ENCODE measurements at regions of chr16 and their contacts with region 1.

Region 1: DNA sequence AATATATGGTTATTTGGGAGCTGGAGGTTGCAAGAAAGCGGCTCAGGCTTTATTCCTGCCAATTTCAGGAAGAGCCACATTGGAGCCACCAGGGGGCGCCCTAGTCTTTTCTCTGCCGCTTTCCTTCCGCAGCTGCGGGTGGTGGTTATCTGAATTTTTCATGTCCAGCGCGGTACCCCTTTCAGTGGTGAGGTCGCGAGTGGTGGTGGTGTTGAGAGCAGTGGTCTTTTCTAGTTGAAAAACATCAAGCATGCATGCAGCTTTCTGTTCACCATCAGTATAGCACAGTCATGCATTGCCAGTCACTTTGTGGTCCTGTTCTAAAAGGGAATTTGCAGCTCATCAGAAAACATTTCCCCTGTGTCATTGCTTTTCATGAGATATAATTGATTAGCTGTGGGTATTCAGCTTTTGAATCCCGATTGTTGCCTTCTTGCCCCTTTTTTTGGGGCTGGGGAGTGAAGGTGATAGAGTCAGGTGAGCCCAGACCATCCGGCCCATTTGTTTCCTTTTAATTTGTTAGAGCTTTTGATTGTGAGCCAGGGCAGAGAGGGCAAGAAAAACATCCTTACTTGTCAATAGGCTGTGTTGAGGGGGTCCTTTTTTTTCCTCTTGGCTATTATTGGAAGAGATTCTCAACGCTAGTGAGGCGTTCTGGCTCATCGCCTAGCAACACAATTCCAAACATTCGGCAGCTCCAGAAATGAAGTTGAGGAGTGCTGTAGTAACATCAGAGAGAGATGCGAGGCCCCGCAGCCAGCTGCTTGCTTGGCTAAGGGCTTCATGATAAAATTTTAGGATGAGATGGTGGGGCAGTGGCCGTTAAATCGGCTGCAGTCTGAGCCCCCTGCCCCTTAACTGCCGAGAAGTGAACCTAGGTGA is 119.0 kb downstream of the SNX29 start:
- DNase-seq: peak; percentile 79
- H3K4me3 ChIP-seq: no peak overlapping the region
- H3K27ac ChIP-seq: no peak overlapping the region
- H3K4me1 ChIP-seq: peaks cover 30% of the 10 kb centered on the region
- CTCF ChIP-seq: peak; percentile 100

Region 2: GRCh38 chr16:12147681-12148080 is 52.2 kb after region 1 on chr16:
- CTCF ChIA-PET with region 1: no interaction called
- POLR2A ChIA-PET with region 1: interaction called, 3 read pairs
- intact Hi-C with region 1: loop called (anchors 5 kb)
- DNase-seq: peak; percentile 93
- H3K4me3 ChIP-seq: peak overlapping the region; percentile 60
- H3K27ac ChIP-seq: peak overlapping the region; percentile 97
- H3K4me1 ChIP-seq: peaks cover 92% of the 10 kb centered on the region
- CTCF ChIP-seq: 0 out of 2 replicates have a peak, but pooled peaks have one; percentile 29

Region 3: GRCh38 chr16:12215277-12216105 is 120.0 kb after region 1 on chr16:
- CTCF ChIA-PET with region 1: no interaction called
- POLR2A ChIA-PET with region 1: no interaction called
- intact Hi-C with region 1: loop called (anchors 10 kb)
- DNase-seq: peak; percentile 59
- H3K4me3 ChIP-seq: no peak overlapping the region
- H3K27ac ChIP-seq: no peak overlapping the region
- H3K4me1 ChIP-seq: peaks cover 9% of the 10 kb centered on the region
- CTCF ChIP-seq: peak; percentile 77

Region 4: DNA sequence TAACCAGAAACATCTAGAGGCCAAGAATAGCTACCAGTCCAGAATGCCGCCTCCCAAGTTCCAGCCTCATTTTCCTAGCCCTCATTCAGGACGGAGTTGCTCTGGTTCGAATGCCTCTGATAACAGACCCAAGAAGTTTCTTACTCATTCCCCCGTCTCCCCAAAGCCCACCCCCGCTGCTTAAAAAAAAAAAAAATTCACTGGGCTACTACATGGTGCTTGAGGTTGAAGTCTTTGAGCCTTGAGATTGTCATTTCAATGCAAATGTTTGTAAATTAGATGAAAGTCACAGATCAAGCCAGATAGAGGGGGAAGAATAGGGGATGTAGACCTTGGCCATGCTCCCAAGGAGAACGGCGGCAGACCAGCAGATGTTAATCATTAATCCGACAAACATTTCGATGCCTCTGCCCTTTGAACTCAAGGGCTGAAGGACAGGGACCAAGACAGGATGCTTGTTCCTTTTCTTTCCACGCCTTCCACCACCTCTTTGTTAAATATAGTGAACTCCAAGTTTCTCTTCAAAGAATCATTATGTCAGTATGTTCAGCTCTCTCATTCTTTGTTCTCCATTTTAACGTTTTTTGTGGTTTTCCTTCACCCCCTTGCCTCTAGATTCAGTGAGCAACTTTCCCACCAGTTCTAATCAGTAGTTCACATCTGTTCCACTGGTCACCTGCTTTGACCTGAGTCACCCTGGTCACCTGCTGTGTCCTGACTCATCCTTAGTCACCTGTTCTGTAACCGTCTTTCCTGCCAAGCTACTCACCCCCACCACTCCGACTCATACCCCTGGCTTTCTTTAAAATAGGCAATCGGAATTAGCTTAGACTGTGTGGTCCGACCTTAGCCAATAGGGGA is 517.8 kb after region 1 on chr16:
- CTCF ChIA-PET with region 1: no interaction called
- POLR2A ChIA-PET with region 1: no interaction called
- intact Hi-C with region 1: loop called (anchors 10 kb)
- DNase-seq: no peak
- H3K4me3 ChIP-seq: no peak overlapping the region
- H3K27ac ChIP-seq: no peak overlapping the region
- H3K4me1 ChIP-seq: peaks cover 10% of the 10 kb centered on the region
- CTCF ChIP-seq: no peak